Ascending aorta (tissue), 2 donors: ENCODE measurements at regions of chr1 and their contacts with region 1.

Region 1: DNA sequence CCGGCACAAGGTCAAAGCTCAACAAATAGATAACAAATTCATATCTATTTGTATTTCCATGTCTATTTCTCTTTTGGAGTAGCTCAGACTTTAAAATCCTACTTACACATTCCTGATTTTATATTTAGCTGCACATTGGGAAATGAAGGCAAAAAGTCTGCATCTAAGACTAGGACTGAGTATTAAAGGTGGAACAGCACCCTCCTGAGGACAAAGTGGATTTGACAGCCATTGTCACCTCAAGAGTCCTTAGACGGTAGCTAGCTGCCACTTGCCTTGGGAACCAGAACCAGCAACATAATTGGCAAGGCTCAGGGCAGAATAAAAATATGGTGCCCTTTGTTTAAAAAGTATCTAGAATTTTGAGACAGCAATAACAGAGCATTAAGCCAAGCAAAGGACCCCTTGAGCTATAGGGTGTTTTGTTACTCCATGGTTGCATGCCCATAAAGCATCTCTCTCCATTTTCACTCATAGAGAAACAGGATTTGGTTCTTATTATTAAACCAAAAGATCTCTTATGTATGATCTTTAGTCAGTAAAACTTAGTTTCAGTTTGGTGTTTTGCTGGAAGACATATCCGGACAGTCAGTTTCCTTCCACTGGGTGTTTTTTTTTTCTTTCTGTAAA is 30.0 kb upstream of the SGIP1 start:
- DNase-seq: no peak
- H3K4me3 ChIP-seq: no peak overlapping the region
- H3K27ac ChIP-seq: no peak overlapping the region
- H3K4me1 ChIP-seq: no peaks in the 10 kb centered on the region
- H3K27me3 ChIP-seq: no peaks in the 10 kb centered on the region
- CTCF ChIP-seq: peak; percentile 41 to 65 (median 50)

Region 2: GRCh38 chr1:66253330-66253921 is 250.5 kb before region 1 on chr1:
- intact Hi-C with region 1: loop called (anchors 5 kb)
- DNase-seq: no peak
- H3K4me3 ChIP-seq: no peak overlapping the region
- H3K27ac ChIP-seq: no peak overlapping the region
- H3K4me1 ChIP-seq: no peaks in the 10 kb centered on the region
- H3K27me3 ChIP-seq: no peaks in the 10 kb centered on the region
- CTCF ChIP-seq: peak; percentile 72 to 76 (median 74)